ENCODE measurements at regions of chr1 and their contacts with region 1.

Region 1: DNA sequence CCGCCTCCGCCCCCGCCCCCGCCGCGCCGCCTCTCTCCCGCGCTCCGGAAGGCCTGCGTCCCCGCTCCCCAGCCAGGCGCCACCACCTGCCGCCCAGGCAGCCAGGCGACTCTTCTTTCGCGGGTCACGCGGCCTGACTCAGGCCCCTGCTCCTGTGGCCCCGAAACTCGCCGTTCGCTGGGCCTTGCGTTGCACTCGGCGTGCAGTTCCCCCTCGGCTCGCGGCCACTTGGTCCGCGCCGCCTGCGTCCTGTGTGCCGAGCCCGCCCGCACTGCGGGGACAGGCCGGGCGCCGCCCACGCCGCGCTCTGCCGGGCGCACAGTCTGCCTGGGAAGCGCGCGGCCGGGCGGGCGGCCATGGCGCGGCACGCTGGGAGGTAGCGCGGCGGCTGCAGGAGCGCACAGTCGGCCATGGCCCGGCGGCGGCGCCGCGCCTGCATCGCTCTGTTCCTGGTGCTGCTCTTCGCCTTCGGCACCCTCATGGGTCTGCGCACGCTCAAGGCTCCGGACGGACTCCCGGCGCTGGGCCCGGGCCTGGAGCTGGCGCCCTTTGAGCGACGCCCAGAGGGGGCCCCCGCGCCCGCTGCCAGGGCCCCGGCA is at the start of gene MANEAL:
- DNase-seq: peak; percentile 47
- ATAC-seq: peak; percentile 68
- H3K4me3 Mint-ChIP-seq: peak within 1 kb of the TSS; percentile 69
- H3K27ac Mint-ChIP-seq: no peak within 1 kb of the TSS
- H3K4me1 Mint-ChIP-seq: peaks cover 12% of the 10 kb centered on the region
- H3K27me3 Mint-ChIP-seq: peaks cover 58% of the 10 kb centered on the region
- CTCF ChIP-seq: no peak
- total RNA-seq, gene MANEAL: 4.2 to 6.4 TPM (median 5.9 TPM) in 3 replicates

Region 2: GRCh38 chr1:37726751-37727585 is 66.9 kb before region 1 on chr1:
- CTCF ChIA-PET with region 1: no interaction called
- POLR2A ChIA-PET with region 1: no interaction called
- DNase-seq: no peak
- ATAC-seq: no peak
- H3K4me3 Mint-ChIP-seq: no peak overlapping the region
- H3K27ac Mint-ChIP-seq: no peak overlapping the region
- H3K4me1 Mint-ChIP-seq: peaks cover 6% of the 10 kb centered on the region; the same call in 1 of the 2 replicates
- H3K27me3 Mint-ChIP-seq: peaks cover 7% of the 10 kb centered on the region; the same call in 1 of the 2 replicates
- CTCF ChIP-seq: no peak

Region 3: GRCh38 chr1:37807555-37808368 is 13.9 kb after region 1 on chr1 and contains the starts of genes C1orf122 and YRDC:
- CTCF ChIA-PET with region 1: interaction called, 10 read pairs
- POLR2A ChIA-PET with region 1: interaction called, 16 read pairs
- DNase-seq: peak; percentile 95
- ATAC-seq: peak; percentile 82
- H3K4me3 Mint-ChIP-seq: peak within 1 kb of the TSS; percentile 88
- H3K27ac Mint-ChIP-seq: peak within 1 kb of the TSS; percentile 78
- H3K4me1 Mint-ChIP-seq: peaks cover 11% of the 10 kb centered on the region; the same call in 1 of the 2 replicates
- H3K27me3 Mint-ChIP-seq: no peaks in the 10 kb centered on the region
- CTCF ChIP-seq: no peak
- total RNA-seq, gene C1orf122: 42.5 to 50.7 TPM (median 45.9 TPM) in 3 replicates
- total RNA-seq, gene YRDC: 20.1 to 24.6 TPM (median 22.7 TPM) in 3 replicates

Region 4: GRCh38 chr1:37851782-37852210 is 57.9 kb after region 1 on chr1:
- CTCF ChIA-PET with region 1: no interaction called
- POLR2A ChIA-PET with region 1: no interaction called
- DNase-seq: no peak
- ATAC-seq: no peak
- H3K4me3 Mint-ChIP-seq: no peak overlapping the region
- H3K27ac Mint-ChIP-seq: no peak overlapping the region
- H3K4me1 Mint-ChIP-seq: no peaks in the 10 kb centered on the region
- H3K27me3 Mint-ChIP-seq: no peaks in the 10 kb centered on the region
- CTCF ChIP-seq: no peak

Measured in WTC11 (cell line).